Activated CD4-positive, alpha-beta T cell treated with anti-CD3 and anti-CD28 coated beads for 36 hours (primary cell): ENCODE measurements at regions of chr5 and their contacts with region 1.

Region 1: DNA sequence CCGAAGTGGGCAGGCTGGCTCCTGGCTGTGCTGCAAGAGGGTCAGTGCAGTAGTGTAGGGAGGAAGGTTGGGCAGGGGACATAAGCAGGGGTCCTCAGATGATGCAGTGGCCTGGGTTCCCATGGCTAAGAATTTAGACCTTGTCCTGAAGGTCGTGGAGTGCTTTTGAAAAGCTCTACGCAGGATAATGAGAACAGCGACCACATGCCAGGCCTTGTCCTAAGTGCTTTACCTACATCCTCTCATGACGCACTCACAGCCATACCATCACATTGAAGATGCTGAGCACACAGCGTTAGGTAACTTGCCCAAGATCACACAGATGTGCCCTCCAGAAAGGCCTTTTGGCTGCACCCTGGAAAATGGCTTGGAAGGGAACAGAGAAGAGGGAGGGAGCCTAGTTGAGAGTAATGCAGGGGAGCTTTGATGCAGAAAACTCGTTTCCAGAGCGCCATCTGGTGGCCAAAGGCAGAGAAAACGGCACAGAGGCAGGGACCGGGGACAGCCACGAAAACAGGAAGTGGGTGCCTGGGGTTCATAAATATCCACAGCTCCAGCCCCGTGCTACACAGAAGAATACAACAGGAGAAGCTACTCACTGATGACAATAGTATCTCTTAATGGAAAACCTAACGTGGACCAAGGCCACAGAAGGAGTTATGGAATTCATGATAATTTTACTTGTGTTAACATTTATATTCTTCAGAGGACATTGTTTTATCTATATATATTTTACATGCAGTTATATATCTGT is 2.6 kb upstream of the PCDH12 start:
- DNase-seq: peak; percentile 95
- ATAC-seq: peak; percentile 88
- H3K4me3 Mint-ChIP-seq: peak overlapping the region; percentile 10
- H3K27ac Mint-ChIP-seq: peak overlapping the region; percentile 82
- H3K4me1 Mint-ChIP-seq: peaks cover 38% of the 10 kb centered on the region
- H3K27me3 Mint-ChIP-seq: no peaks in the 10 kb centered on the region

Region 2: DNA sequence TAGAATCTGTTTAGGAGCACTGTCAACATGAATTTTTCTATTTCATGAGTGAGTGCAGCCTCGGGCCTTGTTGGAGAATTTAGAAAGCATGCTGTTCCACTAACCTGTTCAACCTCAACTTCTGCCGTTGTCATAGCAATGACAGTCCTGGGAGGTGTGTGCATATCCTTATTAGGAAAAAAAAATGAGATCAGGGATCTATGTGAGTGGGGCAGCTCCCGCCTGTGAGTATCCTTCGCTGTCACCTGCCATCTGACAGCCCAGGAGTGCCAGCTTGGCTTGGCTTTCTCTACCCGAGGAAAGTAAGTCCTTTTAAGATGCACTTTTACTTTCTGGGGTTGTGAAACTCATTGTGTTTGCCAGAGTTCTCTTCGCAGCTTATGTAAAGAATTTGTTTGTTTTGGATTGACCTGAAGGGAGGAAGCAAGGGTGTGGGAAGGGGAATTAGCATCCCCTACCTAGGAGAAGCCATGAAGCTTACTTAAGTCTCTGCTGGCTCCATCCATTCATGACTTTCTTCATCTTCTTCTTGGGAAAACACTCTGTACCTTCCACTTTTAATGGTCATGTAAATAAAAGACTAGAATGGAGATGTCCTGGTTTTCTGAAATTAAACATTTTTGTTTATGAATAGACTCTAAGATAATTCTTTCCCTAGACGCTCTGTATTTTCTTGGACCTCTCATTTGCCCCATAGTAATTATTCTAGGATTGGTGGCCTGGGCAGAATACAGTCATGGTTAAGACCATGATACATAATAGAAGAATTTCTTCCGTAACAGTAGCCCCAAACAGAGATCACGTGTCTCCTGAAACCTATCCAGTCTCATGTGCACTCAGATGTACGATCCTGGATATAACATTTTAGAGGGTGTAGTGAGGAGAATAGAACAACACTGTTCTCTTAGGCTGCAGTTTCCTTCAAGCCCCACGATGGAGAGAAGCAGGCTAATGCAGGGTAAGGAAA is 972.3 kb before region 1 on chr5:
- CTCF ChIA-PET with region 1: no interaction called
- POLR2A ChIA-PET with region 1: no interaction called
- intact Hi-C with region 1: no loop called
- DNase-seq: no peak
- ATAC-seq: no peak
- H3K4me3 Mint-ChIP-seq: no peak overlapping the region
- H3K27ac Mint-ChIP-seq: no peak overlapping the region
- H3K4me1 Mint-ChIP-seq: no peaks in the 10 kb centered on the region
- H3K27me3 Mint-ChIP-seq: peaks cover 13% of the 10 kb centered on the region

Region 3: GRCh38 chr5:141664732-141665461 is 295.7 kb before region 1 on chr5:
- CTCF ChIA-PET with region 1: interaction called, 17 read pairs
- POLR2A ChIA-PET with region 1: no interaction called
- intact Hi-C with region 1: loop called (anchors 1 to 10 kb)
- DNase-seq: peak; percentile 86
- ATAC-seq: peak; percentile 97
- H3K4me3 Mint-ChIP-seq: no peak overlapping the region
- H3K27ac Mint-ChIP-seq: no peak overlapping the region
- H3K4me1 Mint-ChIP-seq: peaks cover 4% of the 10 kb centered on the region
- H3K27me3 Mint-ChIP-seq: no peaks in the 10 kb centered on the region

Region 4: GRCh38 chr5:141701360-141702119 is 259.1 kb before region 1 on chr5:
- CTCF ChIA-PET with region 1: interaction called, 152 read pairs
- POLR2A ChIA-PET with region 1: no interaction called
- intact Hi-C with region 1: loop called in 1 of 2 experiments (anchors 1 kb)
- DNase-seq: peak; percentile 47
- ATAC-seq: peak; percentile 46
- H3K4me3 Mint-ChIP-seq: peak overlapping the region; percentile 59
- H3K27ac Mint-ChIP-seq: no peak overlapping the region
- H3K4me1 Mint-ChIP-seq: peaks cover 20% of the 10 kb centered on the region
- H3K27me3 Mint-ChIP-seq: peaks cover 27% of the 10 kb centered on the region

Region 5: GRCh38 chr5:141914199-141914743 is 46.4 kb before region 1 on chr5:
- CTCF ChIA-PET with region 1: interaction called, 21 read pairs
- POLR2A ChIA-PET with region 1: no interaction called
- intact Hi-C with region 1: no loop called
- DNase-seq: peak; percentile 43
- ATAC-seq: peak; percentile 69
- H3K4me3 Mint-ChIP-seq: no peak overlapping the region
- H3K27ac Mint-ChIP-seq: no peak overlapping the region
- H3K4me1 Mint-ChIP-seq: peaks cover 8% of the 10 kb centered on the region
- H3K27me3 Mint-ChIP-seq: peaks cover 26% of the 10 kb centered on the region

Region 6: DNA sequence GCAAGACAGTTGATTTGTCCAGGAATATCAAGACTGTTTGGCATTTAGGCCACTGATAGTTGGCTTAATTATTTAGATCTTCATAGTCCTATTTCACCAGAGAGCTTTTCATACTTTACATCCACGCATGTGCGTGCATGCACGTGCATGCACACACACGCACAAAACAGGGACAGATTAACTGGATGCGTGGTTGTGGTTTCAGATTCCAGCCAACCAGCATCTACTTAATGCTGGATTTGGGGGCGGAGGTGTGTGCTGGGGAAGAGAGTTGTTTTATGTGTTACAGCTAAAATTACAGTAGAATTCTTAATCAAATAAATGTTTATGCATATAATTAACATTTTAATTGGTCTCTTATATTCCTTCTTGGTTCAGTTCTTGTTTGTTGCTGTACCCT is 15.6 kb after region 1 on chr5:
- CTCF ChIA-PET with region 1: interaction called, 80 read pairs
- POLR2A ChIA-PET with region 1: interaction called, 3 read pairs
- intact Hi-C with region 1: no loop called
- DNase-seq: no peak
- ATAC-seq: no peak
- H3K4me3 Mint-ChIP-seq: no peak overlapping the region
- H3K27ac Mint-ChIP-seq: no peak overlapping the region
- H3K4me1 Mint-ChIP-seq: peaks cover 28% of the 10 kb centered on the region
- H3K27me3 Mint-ChIP-seq: no peaks in the 10 kb centered on the region